Activated CD4-positive, alpha-beta T cell treated with anti-CD3 and anti-CD28 coated beads, Interleukin-2, amount 10 ng/mL, durations not matched to agents 24 days and 14 days (primary cell): ENCODE measurements at regions of chr1 and their contacts with region 1.

Region 1: DNA sequence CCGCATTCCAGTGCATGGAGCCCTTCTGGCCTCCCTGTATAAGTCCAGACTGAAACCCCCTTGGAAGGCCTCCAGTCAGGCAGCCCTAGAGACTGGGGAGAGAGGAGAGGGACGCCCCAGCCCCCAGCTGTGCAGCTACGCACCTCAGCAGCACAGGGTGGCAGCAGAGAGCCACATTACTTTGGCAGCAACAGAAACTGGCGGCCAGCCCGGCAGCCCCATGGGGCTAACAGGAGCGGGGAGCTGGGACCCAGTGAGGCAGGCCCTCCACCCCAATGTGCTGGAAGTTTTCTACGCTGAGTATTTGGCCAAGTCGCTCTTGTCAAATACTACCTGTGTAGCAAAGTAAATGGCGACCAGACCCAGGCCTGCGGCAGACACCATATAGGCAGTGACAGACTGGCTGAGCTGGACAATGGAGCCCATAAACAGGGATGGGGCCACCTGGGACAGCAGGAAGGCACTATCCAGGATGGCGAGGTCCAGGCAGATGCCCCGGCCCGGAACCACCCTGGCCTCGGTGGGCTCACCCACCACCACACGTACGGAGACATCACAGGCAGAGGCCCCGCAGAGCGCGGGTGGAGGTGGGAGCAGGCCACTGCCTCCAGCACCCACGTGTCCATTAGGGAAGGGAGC is 21.2 kb downstream of the SLC45A3 start:
- DNase-seq: peak; percentile 94
- H3K4me3 Mint-ChIP-seq: no peak overlapping the region
- H3K27ac Mint-ChIP-seq: no peak overlapping the region
- H3K4me1 Mint-ChIP-seq: peaks cover 2% of the 10 kb centered on the region
- H3K27me3 Mint-ChIP-seq: peaks cover 11% of the 10 kb centered on the region

Region 2: DNA sequence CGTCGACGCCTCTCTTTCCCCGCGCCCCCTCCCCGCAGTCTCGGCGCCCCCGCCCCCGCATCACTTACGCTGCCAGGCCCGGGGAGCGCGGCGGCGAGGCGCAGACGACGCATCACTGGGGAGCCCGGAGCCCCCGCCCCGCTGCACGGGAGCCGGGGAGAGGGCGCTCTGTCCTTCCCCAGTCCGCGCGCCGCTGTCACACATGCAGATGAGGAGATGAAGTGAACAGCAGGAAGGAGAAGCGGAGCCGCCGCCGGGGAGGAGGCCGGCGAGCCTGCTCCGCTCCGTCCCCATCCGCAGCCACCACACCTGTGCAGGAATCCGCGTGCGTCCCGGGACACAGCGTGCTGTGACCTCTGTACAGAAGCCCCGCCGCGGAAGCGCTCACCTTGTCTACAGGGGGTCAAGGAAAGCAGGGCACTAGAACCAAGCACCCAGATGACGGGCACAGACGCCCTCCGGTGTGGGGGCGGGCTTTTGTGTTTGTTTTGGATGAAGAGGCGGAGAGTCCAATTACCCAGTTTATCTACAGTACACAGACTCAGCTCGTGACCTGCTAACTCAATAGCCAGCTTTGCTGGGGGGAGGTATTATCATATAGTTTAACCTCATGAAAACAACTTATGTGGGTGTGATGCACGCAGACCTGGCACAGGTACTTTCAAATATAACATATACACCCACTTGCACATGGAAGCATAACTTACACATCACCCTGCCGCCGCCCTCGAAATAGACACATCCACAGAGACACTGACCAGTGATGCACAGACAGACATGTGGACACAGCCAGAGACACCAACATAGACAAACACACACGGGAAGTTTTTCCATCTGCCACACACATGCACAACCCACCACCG is 314.8 kb before region 1 on chr1:
- intact Hi-C with region 1: loop called (anchors 10 kb)
- DNase-seq: peak; percentile 82
- H3K4me3 Mint-ChIP-seq: peak overlapping the region; percentile 73
- H3K27ac Mint-ChIP-seq: no peak overlapping the region
- H3K4me1 Mint-ChIP-seq: peaks cover 6% of the 10 kb centered on the region
- H3K27me3 Mint-ChIP-seq: peaks cover 60% of the 10 kb centered on the region

Region 3: DNA sequence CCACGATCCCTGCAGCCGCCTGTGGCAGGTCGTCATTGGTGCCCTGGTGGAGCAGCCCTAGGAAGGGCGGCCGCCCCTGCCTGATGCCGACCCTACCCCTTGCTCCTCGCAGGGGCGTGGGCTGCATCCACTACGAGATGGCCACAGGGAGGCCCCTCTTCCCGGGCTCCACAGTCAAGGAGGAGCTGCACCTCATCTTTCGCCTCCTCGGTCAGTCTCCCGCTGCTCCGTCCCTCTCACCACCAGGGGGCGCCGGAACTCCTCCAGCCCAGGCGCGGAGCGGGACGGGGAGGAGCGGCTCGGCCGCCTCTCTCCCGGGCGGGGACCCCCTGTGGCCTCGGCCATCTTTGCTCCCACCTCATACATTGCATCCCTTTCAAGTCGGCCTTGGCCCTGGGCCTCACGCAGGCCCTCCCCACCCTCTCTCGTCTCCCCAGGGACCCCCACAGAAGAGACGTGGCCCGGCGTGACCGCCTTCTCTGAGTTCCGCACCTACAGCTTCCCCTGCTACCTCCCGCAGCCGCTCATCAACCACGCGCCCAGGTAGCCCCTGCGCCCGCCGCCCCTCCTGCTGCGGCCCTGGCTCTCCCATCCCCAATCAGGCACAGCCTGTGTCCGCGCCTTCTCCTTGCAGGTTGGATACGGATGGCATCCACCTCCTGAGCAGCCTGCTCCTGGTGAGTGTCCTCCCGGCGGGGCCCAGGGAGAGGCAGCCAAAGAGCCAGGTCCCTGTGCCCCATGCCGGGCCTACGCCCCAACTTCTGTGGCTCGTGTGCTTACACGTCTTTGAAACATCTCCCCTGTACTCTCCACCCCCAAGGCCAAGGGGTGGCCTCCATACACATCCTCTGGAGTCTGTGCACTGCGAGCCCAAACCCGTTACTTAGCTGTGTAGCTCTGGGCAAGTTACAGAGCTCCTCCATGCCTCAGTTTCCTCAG is 129.9 kb before region 1 on chr1:
- intact Hi-C with region 1: loop called (anchors 1 kb)
- DNase-seq: peak; percentile 95
- H3K4me3 Mint-ChIP-seq: peak overlapping the region; percentile 48
- H3K27ac Mint-ChIP-seq: peak overlapping the region; percentile 34
- H3K4me1 Mint-ChIP-seq: peaks cover 3% of the 10 kb centered on the region
- H3K27me3 Mint-ChIP-seq: peaks cover 6% of the 10 kb centered on the region

Region 4: GRCh38 chr1:205591522-205592351 is 67.3 kb before region 1 on chr1:
- intact Hi-C with region 1: loop called (anchors 1 kb)
- DNase-seq: peak; percentile 97
- H3K4me3 Mint-ChIP-seq: peak overlapping the region; percentile 91
- H3K27ac Mint-ChIP-seq: peak overlapping the region; percentile 92
- H3K4me1 Mint-ChIP-seq: peaks cover 44% of the 10 kb centered on the region
- H3K27me3 Mint-ChIP-seq: no peaks in the 10 kb centered on the region

Region 5: GRCh38 chr1:205711104-205712020 is 52.3 kb after region 1 on chr1:
- intact Hi-C with region 1: loop called (anchors 1 kb)
- DNase-seq: peak; percentile 90
- H3K4me3 Mint-ChIP-seq: no peak overlapping the region
- H3K27ac Mint-ChIP-seq: peak overlapping the region; percentile 44
- H3K4me1 Mint-ChIP-seq: peaks cover 19% of the 10 kb centered on the region
- H3K27me3 Mint-ChIP-seq: no peaks in the 10 kb centered on the region

Region 6: GRCh38 chr1:205775015-205775716 is 116.1 kb after region 1 on chr1 and contains the start of gene RAB29:
- intact Hi-C with region 1: loop called (anchors 5 kb)
- DNase-seq: peak; percentile 96
- H3K4me3 Mint-ChIP-seq: peak within 1 kb of the TSS; percentile 96
- H3K27ac Mint-ChIP-seq: peak within 1 kb of the TSS; percentile 95
- H3K4me1 Mint-ChIP-seq: peaks cover 51% of the 10 kb centered on the region
- H3K27me3 Mint-ChIP-seq: no peaks in the 10 kb centered on the region
- total RNA-seq, gene RAB29: 27.8 and 29.1 TPM in 2 replicates

Region 7: DNA sequence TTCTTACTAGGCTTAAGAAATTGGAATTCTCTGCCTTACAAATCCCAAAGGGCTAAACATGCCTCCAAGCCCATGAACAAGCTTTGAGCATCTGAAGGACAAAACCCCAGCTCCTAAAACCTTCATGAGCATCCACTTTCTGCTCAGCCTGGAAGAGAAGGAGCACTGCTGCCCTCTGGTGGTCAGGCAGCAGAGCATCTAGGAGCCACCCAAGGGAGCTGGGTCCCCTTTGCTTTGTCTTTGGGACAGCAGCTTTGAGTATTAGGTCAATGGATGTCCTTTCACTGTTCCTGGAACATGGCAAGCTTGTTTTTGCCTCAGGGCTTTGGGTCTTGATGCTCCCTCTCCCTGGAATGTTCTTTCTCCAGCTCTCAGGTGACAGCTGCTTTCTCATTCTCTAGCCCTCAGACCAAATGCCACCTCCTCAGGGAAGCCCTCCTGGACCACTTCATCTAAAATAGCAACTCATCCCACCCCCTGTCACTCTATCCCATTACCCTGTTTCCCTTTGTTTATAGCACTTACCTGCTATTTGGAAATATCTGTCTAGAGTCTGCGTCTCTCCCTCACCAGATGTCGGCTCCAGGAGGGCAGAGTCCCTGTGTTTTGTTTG is 318.4 kb after region 1 on chr1:
- intact Hi-C with region 1: loop called (anchors 2 kb)
- DNase-seq: peak; percentile 92
- H3K4me3 Mint-ChIP-seq: no peak overlapping the region
- H3K27ac Mint-ChIP-seq: no peak overlapping the region
- H3K4me1 Mint-ChIP-seq: peaks cover 2% of the 10 kb centered on the region
- H3K27me3 Mint-ChIP-seq: peaks cover 2% of the 10 kb centered on the region